Motor neuron (in vitro differentiated cells): ENCODE measurements at regions of chr1 and their contacts with region 1.

Region 1: DNA sequence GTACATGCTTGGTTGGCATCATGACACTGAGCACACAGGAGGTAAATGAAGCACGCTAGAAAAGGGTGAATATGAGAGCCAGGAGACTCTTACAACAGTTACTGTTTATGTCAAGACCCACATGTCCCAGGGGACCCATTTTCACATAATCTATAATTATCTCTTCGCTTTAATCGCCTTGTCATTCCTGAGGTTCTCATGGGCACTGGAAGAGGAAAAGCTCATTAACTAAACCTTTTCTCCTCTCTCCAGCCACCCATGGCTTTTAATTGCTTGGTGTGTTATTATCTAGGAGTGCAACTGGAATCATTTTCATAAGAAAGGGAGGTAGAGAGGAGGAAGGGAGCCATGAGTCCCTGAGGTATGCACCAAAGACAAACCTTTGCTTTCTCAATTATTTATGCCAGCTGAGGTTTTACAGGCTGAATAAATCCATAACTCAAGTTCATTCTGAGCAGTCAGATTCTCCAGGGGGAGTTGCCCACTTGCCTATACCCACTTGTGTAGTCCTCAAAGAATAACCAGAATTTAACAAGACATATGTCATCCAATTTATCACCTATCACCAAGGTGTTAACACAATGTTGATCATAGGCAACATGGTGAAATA is 77.4 kb downstream of the ACBD6 start:
- ATAC-seq: peak in 5 of 8 experiments; percentile 27 to 88 (median 86)
- H3K4me3 ChIP-seq: no peak overlapping the region
- H3K27ac ChIP-seq: no peak overlapping the region
- H3K4me1 ChIP-seq: peaks cover 19 to 35% of the 10 kb centered on the region in 2 donors

Region 2: DNA sequence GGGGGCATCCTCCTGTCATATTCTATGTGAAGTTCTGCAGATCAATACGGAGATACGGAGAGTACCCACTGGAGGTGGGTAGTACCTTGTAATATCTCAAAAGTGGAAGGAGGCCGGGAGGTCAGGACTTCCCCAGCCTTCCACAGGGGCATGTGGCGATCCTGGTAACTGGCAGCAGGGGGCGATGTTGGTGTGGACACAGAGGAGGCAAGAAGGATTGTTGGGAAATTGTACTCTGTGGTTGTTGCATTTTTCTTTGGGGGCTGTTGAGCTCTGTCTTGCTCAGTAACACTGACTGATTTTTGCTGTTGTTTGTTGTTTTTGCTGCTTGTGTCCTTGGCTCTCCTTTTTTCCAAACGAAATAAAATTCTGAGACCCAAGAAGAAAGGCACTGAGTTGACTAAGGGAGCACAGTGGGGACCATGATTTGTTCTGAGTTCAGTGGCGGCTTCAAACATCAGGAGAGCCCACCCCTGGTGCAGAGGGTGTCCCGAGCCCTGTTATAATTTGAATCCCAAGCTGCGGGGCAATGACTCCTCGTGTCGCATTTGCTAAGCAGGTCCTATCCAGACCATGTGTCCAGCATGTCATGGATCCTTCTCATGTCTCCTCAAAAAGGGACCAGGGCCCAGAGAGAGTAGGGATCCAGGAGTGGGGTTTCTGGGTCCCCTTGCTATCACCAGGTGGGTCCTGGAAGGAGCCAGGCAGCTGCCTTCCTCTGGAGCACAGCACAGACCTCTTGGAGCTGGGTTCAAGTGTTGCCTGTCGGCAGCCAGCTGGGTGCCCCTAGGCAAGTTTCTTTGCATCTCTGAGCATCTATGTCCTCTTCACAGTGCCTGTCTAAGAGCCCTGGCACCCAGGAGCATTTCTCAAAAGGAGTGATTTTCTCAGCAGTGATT is 172.1 kb before region 1 on chr1:
- in situ Hi-C with region 1: loop called in 1 of 9 experiments (anchors 10 kb)
- ATAC-seq: peak in 3 of 8 experiments; percentile 64 to 79 (median 74)
- H3K4me3 ChIP-seq: no peak overlapping the region
- H3K27ac ChIP-seq: no peak overlapping the region
- H3K4me1 ChIP-seq: peaks cover 48% of the 10 kb centered on the region in 2 donors

Region 3: DNA sequence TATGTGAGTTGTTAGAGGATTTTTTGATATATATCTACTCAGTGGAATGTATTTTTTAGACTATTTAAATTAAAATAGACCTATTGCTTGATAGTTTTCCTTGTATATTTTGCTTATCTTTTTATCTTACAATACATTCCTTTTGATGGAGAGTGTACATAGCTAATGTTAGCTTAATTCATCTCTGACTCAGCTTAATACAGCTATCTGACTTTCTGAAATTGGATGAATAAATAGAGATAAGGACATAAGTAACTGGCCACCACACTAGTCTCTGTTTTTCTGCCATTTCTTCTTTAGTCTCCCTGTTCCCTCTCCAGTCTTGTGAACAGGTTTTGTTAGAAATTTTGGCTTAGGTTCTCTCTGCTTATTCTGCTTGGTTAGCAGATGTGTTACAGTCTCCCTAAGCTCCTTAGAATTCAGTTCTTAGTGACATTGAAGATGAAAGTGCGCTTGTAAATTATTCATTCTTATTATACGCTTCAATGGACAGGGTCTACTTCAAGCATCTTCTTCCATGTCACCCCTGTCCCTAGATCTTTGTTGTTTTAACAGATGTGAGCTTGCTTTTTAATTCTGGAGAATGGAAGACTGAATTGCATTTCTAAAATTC is 266.5 kb after region 1 on chr1:
- in situ Hi-C with region 1: no loop called
- ATAC-seq: peak in 5 of 8 experiments; percentile 23 to 65 (median 52)
- H3K4me3 ChIP-seq: no peak overlapping the region
- H3K27ac ChIP-seq: no peak overlapping the region
- H3K4me1 ChIP-seq: peaks cover 4 to 12% of the 10 kb centered on the region in 2 donors